PC-9 (cell line): ENCODE measurements at regions of chr20 and their contacts with region 1.

Region 1: GRCh38 chr20:33262658-33263065 is 20.4 kb upstream of the BPIFB1 start:
- DNase-seq: peak; percentile 38 to 66
- H3K4me3 ChIP-seq: no peak overlapping the region
- H3K27ac ChIP-seq: peak overlapping the region; percentile 33
- H3K4me1 ChIP-seq: peaks cover 32% of the 10 kb centered on the region; the same call in 1 of the 2 replicates
- H3K27me3 ChIP-seq: no peaks in the 10 kb centered on the region
- CTCF ChIP-seq: peak; percentile 65; the same call in 1 of the 2 replicates

Region 2: GRCh38 chr20:32497589-32498224 is 765.0 kb before region 1 on chr20:
- CTCF ChIA-PET with region 1: interaction called, 14 read pairs
- POLR2A ChIA-PET with region 1: no interaction called
- intact Hi-C with region 1: no loop called
- DNase-seq: no peak
- H3K4me3 ChIP-seq: no peak overlapping the region
- H3K27ac ChIP-seq: no peak overlapping the region
- H3K4me1 ChIP-seq: no peaks in the 10 kb centered on the region
- H3K27me3 ChIP-seq: no peaks in the 10 kb centered on the region
- CTCF ChIP-seq: no peak

Region 3: GRCh38 chr20:33217052-33217451 is 45.6 kb before region 1 on chr20 and contains the start of gene BPIFA3:
- CTCF ChIA-PET with region 1: no interaction called
- POLR2A ChIA-PET with region 1: no interaction called
- intact Hi-C with region 1: no loop called
- DNase-seq: no peak
- H3K4me3 ChIP-seq: no peak within 1 kb of the TSS
- H3K27ac ChIP-seq: no peak within 1 kb of the TSS
- H3K4me1 ChIP-seq: no peaks in the 10 kb centered on the region
- H3K27me3 ChIP-seq: peaks cover 37% of the 10 kb centered on the region
- CTCF ChIP-seq: no peak
- total RNA-seq, gene BPIFA3: not detected in 2 replicates

Region 4: DNA sequence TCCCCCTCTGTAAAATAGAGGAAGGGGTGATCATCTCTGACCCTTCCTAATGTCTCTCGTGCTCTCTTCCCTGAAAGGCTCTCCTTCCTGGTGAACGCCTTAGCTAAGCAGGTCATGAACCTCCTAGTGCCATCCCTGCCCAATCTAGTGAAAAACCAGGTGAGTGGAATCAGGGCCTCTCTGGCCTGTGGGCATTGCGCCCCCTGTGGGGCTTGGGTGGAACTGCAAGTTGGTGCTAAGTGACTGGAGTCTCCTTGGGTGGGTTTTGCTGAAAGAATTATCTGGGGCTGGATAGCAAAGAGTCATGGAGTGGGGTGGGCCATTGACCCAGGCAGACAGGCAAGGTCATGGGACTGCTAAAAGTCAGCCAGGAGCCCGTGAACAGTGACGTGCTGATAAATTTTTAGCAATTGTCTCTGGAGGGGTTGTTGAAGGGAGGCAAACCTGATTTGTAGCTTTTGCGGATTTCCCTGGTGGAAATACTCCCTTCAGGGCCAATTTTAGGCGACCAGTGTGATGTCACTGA is 29.2 kb after region 1 on chr20:
- CTCF ChIA-PET with region 1: interaction called, 7 read pairs
- POLR2A ChIA-PET with region 1: no interaction called
- intact Hi-C with region 1: loop called (anchors 1 kb)
- DNase-seq: peak in 1 of 2 experiments; percentile 61
- H3K4me3 ChIP-seq: no peak overlapping the region
- H3K27ac ChIP-seq: no peak overlapping the region
- H3K4me1 ChIP-seq: no peaks in the 10 kb centered on the region
- H3K27me3 ChIP-seq: no peaks in the 10 kb centered on the region
- CTCF ChIP-seq: peak; percentile 99

Region 5: DNA sequence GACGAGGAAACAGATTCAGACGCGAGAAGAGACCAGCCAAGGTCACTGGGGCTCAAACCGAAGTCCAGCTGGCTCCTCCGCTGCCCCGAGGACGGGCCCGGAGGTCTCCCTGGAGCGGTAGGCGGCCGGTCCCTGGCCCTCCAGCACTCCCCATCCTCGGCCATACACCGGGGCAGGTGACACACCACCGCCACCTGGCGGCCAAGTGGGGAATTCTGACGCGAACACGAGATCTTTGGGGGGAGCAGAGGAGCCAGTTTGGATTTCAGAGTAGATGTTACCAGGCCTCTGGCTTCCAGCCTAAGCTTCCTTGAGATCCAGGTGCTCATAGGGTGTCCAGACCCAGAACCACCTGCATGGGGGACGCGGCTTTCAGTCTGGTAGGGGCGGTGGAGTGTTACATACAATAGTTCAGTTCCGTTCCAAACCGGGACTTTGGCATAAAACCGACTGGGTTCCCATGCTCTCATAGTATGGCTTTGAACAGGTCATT is 36.5 kb after region 1 on chr20:
- CTCF ChIA-PET with region 1: interaction called, 3 read pairs
- POLR2A ChIA-PET with region 1: no interaction called
- intact Hi-C with region 1: loop called (anchors 1 kb)
- DNase-seq: peak; percentile 33 to 74
- H3K4me3 ChIP-seq: no peak overlapping the region
- H3K27ac ChIP-seq: no peak overlapping the region
- H3K4me1 ChIP-seq: no peaks in the 10 kb centered on the region
- H3K27me3 ChIP-seq: peaks cover 4% of the 10 kb centered on the region; the same call in 1 of the 2 replicates
- CTCF ChIP-seq: peak; percentile 98